Caco-2 (cell line): ENCODE measurements at regions of chr5 and their contacts with region 1.

Region 1: GRCh38 chr5:150161242-150162141 is 5.1 kb upstream of the CDX1 start:
- DNase-seq: peak; percentile 89 to 91
- H3K4me3 ChIP-seq: no peak overlapping the region
- H3K4me3 Mint-ChIP-seq: peak overlapping the region; percentile 23
- H3K27ac Mint-ChIP-seq: peak overlapping the region; percentile 95
- H3K4me1 ChIP-seq: peaks cover 46% of the 10 kb centered on the region
- H3K4me1 Mint-ChIP-seq: peaks cover 48% of the 10 kb centered on the region
- H3K27me3 ChIP-seq: no peaks in the 10 kb centered on the region
- H3K27me3 Mint-ChIP-seq: no peaks in the 10 kb centered on the region
- CTCF ChIP-seq: peak; percentile 94 to 98

Region 2: DNA sequence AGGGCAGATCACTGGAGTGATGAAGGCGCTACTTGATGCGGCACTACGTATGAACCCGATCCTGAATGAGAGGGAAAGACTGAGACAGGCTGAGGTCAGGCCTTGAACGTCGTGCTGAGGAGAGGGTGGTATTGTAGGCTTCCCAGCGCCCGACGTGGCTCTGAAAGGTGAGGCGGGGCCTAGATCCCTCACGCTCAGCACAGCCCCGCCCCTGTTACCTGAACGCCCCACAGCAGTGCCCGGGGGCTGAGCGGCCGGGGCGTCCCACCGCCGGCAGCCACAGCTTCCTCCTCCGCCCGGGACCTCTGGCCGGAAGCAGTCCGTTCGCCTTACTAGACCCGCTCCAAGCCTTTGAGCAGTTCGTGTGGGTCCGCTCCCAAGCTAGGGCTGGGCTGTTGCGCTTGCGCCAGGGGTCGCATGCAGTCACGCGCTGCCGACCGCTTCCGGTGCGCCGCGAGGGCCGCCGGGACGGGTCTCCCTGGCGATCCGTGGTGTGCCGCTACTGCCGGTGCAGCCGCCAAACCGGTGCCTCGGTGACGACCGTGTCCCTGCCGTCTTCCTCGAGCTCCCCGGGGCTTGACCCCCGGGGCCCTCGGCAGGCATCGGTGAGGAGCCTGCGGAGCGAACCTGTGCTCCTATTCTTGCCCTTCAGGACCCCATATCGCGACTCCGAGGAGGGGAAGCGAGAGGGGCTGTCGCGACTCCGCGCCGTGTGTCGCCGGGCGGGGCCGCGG is 161.1 kb before region 1 on chr5 and contains the starts of genes HMGXB3 and TIGD6:
- CTCF ChIA-PET with region 1: no interaction called
- POLR2A ChIA-PET with region 1: no interaction called
- intact Hi-C with region 1: no loop called
- DNase-seq: peak; percentile 95 to 97
- H3K4me3 ChIP-seq: peak within 1 kb of the TSS; percentile 72
- H3K4me3 Mint-ChIP-seq: peak within 1 kb of the TSS; percentile 85
- H3K27ac Mint-ChIP-seq: peak within 1 kb of the TSS; percentile 86
- H3K4me1 ChIP-seq: peaks cover 34% of the 10 kb centered on the region
- H3K4me1 Mint-ChIP-seq: peaks cover 42% of the 10 kb centered on the region
- H3K27me3 ChIP-seq: no peaks in the 10 kb centered on the region
- H3K27me3 Mint-ChIP-seq: no peaks in the 10 kb centered on the region
- CTCF ChIP-seq: no peak
- total RNA-seq, gene HMGXB3: 43.8 and 49.5 TPM in 2 replicates
- total RNA-seq, gene TIGD6: 3.0 and 4.3 TPM in 2 replicates

Region 3: DNA sequence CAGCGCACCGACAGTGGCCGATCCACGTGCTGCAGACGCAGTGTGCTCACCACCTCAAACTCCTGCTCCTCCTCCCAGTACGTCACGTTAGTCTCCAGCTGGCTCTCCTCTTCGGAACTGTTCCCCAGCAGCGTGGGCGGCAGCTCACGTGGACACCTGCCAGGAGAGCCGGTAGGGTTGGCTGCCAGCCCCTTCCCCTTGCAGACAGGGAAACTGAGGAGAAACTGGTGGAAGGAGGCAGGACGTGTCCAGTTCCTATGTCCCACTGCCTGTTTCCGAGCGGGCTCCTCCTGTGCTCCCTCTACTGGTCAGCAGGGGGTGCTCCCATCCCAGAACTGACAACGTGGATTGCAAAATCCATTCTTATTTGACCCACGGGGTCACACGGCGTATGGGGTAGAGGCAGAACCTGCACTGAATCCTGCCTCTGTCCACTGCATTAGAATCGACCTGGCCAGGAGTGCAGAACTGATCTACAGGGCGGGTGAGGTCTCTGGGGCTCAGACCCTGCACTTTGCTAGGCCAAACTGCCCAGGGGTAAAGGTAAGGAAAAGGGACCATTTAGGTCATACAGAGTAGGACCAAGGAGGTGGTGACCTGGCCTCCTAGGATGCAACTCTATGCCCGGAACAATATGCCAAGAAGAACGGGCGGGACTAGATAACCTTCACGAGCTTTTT is 31.5 kb before region 1 on chr5:
- CTCF ChIA-PET with region 1: no interaction called
- POLR2A ChIA-PET with region 1: no interaction called
- intact Hi-C with region 1: loop called (anchors 1 kb)
- DNase-seq: peak; percentile 80 to 86
- H3K4me3 ChIP-seq: no peak overlapping the region
- H3K4me3 Mint-ChIP-seq: no peak overlapping the region
- H3K27ac Mint-ChIP-seq: no peak overlapping the region
- H3K4me1 ChIP-seq: peaks cover 10% of the 10 kb centered on the region
- H3K4me1 Mint-ChIP-seq: peaks cover 9% of the 10 kb centered on the region
- H3K27me3 ChIP-seq: no peaks in the 10 kb centered on the region
- H3K27me3 Mint-ChIP-seq: no peaks in the 10 kb centered on the region
- CTCF ChIP-seq: peak; percentile 95 to 96

Region 4: GRCh38 chr5:150137168-150137957 is 24.1 kb before region 1 on chr5:
- CTCF ChIA-PET with region 1: interaction called, 5 read pairs
- POLR2A ChIA-PET with region 1: no interaction called
- intact Hi-C with region 1: loop called (anchors 1 kb)
- DNase-seq: peak; percentile 94 to 95
- H3K4me3 ChIP-seq: no peak overlapping the region
- H3K4me3 Mint-ChIP-seq: peak overlapping the region; percentile 72
- H3K27ac Mint-ChIP-seq: peak overlapping the region; percentile 92
- H3K4me1 ChIP-seq: peaks cover 65% of the 10 kb centered on the region
- H3K4me1 Mint-ChIP-seq: peaks cover 47% of the 10 kb centered on the region
- H3K27me3 ChIP-seq: no peaks in the 10 kb centered on the region
- H3K27me3 Mint-ChIP-seq: no peaks in the 10 kb centered on the region
- CTCF ChIP-seq: no peak

Region 5: DNA sequence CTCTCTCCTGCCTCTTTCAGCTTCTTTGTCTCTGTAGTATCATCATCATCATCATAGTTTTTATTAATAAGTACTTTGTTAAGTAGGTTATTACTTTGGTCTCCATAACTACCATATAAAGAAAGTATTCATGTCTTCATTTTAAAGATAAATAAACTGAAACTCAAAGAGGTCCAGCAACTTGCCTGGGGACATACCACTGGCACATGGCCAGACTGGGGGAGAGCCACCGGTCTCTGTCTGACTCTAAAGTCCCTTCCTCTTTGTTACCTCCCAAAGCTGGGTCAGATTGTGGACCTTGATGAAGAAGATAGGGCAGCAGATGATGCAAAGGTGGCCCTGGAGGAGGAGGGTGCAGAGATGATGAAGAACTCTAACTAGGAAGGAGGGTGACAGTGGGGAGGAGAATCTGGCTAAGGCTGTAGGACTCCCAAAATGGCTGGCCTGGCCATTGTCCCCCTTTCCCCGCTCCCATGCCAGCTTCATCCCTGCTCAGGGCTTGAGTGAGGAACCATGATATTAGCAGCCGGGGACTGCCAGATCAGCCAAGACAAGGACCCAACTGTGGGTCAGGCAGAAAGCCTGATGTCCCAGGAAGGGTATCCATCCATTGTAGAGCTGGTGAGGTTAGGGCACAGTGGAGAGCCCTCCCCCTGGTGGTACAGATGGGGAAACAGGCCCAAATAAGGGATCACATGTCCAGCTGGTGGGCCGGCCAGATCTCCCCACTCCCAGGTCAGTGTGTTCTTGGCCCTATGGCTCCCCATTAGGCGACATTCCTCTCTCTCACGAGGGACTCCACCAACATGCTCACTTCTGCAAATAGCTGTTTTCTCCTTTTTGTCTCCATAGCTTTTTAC is 13.8 kb after region 1 on chr5:
- CTCF ChIA-PET with region 1: interaction called, 8 read pairs
- POLR2A ChIA-PET with region 1: no interaction called
- intact Hi-C with region 1: loop called (anchors 1 kb)
- DNase-seq: peak; percentile 62 to 72
- H3K4me3 ChIP-seq: no peak overlapping the region
- H3K4me3 Mint-ChIP-seq: no peak overlapping the region
- H3K27ac Mint-ChIP-seq: no peak overlapping the region
- H3K4me1 ChIP-seq: peaks cover 5% of the 10 kb centered on the region; the same call in 1 of the 2 replicates
- H3K4me1 Mint-ChIP-seq: peaks cover 19% of the 10 kb centered on the region
- H3K27me3 ChIP-seq: no peaks in the 10 kb centered on the region
- H3K27me3 Mint-ChIP-seq: no peaks in the 10 kb centered on the region
- CTCF ChIP-seq: peak; percentile 63 to 67

Region 6: DNA sequence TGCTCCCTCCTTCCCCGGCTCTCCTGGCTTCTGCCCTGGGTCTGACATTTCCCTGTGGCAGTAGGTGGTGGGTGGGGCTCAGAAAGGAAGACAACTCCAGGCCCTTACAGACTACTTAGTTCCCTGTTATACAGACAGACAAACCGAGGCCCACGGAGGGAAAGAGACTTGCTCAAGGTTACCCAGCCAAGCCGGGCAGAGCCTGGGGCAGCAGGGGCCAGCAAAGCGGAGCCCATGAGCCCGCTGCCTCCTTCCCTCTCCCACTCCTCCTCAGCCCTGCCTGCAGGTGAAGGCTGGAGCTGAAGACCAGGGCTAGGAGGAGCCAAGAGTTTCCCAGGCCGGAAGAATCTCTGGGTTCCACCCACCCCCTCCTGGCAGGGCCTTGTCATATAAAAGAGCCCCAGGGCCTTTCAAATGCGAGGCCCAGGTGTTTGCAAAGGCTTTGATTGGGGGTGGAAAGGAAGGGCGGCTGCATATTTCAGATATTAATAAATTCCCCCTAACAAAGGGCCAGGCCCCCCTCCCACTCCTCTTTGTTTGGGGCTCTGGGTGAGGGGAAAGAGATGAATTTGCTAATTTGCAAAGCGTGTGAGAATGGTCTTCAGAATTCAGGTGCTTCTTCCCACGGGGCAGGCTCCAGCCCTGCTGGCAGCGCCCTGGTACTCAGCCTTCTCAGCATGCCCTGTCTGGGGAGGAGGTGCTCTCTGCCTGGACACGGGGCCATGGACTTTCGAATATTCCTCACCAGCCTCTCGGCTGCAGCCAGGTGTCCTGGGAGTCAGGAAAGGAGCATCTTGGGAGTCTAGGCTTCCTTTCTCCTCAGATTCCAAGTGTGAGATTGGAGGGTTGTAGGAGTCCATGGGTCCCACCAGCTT is 49.9 kb after region 1 on chr5:
- CTCF ChIA-PET with region 1: interaction called, 14 read pairs
- POLR2A ChIA-PET with region 1: no interaction called
- intact Hi-C with region 1: loop called (anchors 2 kb)
- DNase-seq: peak; percentile 60 to 69
- H3K4me3 ChIP-seq: no peak overlapping the region
- H3K4me3 Mint-ChIP-seq: no peak overlapping the region
- H3K27ac Mint-ChIP-seq: peak overlapping the region; percentile 76
- H3K4me1 ChIP-seq: peaks cover 20% of the 10 kb centered on the region
- H3K4me1 Mint-ChIP-seq: peaks cover 29% of the 10 kb centered on the region
- H3K27me3 ChIP-seq: no peaks in the 10 kb centered on the region
- H3K27me3 Mint-ChIP-seq: no peaks in the 10 kb centered on the region
- CTCF ChIP-seq: peak in 1 of 2 experiments; percentile 35

Region 7: DNA sequence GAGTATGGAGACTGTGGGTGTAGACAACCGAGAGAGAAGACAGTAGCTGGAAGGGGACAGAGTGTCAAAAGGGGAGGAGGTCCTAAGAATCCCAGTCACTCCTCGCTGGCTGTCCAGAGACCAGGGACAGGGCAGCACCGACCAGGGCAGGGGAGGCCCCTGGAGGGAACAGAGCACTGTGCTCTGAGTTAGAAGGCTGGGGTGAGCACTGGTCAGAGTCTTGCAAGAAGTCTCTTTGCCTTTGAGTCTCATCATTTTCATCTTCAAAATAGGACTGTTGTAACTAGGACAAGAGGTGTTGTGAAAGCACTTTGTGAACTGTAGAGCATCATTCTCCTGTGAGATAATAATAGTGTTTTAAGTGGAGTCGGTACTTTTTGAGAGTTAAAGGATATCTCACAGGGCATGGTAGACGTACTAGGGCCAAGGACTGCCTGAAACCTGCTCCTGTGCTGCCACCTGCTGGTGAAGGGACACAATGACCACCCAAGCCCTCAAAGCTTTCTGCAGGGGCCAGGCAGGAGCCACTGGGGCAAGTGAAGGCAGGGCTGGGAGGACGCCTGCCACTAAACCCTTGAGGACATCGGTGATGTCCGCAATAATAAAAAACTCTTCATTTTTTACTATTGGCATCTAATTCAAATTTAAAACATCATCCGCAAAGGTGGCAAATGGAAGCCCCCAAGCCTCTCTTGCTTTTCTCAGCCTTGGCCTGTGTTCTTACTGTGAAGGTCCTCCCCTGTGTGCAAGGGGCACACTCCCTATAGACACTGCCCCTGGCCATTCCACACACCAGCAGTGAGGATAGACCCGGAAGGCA is 56.6 kb after region 1 on chr5:
- CTCF ChIA-PET with region 1: interaction called, 14 read pairs
- POLR2A ChIA-PET with region 1: no interaction called
- intact Hi-C with region 1: loop called (anchors 1 kb)
- DNase-seq: peak; percentile 83 to 89
- H3K4me3 ChIP-seq: no peak overlapping the region
- H3K4me3 Mint-ChIP-seq: no peak overlapping the region
- H3K27ac Mint-ChIP-seq: peak overlapping the region; percentile 54
- H3K4me1 ChIP-seq: peaks cover 19% of the 10 kb centered on the region
- H3K4me1 Mint-ChIP-seq: peaks cover 18% of the 10 kb centered on the region
- H3K27me3 ChIP-seq: no peaks in the 10 kb centered on the region
- H3K27me3 Mint-ChIP-seq: no peaks in the 10 kb centered on the region
- CTCF ChIP-seq: peak; percentile 83 to 93

Region 8: DNA sequence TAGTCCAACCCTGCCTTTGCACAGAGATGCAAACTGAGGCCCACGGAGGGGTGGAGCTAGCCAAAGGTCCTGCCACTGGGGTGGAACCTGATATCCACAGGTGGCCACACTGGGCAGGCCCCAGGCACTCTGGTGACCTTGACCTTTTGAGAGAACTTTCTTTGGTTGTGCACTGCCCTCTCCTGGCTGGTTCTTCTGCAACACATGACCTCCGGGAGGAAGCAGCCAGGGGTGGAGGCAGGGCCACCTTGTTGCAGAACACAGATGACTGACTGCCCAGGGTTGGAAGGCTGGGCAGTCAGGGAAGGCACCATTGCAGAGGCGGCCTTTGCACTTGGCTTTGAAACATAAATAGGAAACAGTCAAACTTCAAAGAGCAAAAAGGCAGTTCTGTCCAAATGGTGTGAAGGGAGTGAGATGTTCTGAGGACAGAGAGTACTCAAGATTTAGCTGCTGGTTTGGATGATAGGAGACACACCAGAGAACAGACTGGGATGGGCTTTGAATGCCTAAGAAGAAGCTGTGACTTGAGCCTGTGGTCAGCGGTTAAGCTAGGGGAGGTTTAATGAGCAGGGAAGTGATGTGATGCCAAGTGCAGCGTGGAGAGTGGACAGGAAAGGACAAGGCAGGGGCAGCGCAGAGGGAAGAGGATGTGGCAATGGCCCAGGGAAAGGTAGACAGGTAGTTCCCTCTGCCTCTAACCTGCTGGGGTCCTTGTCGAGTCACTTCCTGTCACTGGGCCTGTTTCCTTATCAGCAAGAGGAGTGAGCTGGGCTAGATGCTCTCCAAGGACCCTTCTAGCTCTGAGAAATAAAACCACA is 189.2 kb after region 1 on chr5:
- CTCF ChIA-PET with region 1: no interaction called
- POLR2A ChIA-PET with region 1: no interaction called
- intact Hi-C with region 1: loop called (anchors 1 kb)
- DNase-seq: peak; percentile 84 to 85
- H3K4me3 ChIP-seq: no peak overlapping the region
- H3K4me3 Mint-ChIP-seq: no peak overlapping the region
- H3K27ac Mint-ChIP-seq: no peak overlapping the region
- H3K4me1 ChIP-seq: no peaks in the 10 kb centered on the region
- H3K4me1 Mint-ChIP-seq: peaks cover 7% of the 10 kb centered on the region
- H3K27me3 ChIP-seq: no peaks in the 10 kb centered on the region
- H3K27me3 Mint-ChIP-seq: no peaks in the 10 kb centered on the region
- CTCF ChIP-seq: peak; percentile 68 to 82